ENCODE measurements at regions of chr6 and their contacts with region 1.

Region 1: GRCh38 chr6:130843575-130844320 is 16.5 kb downstream of the SMLR1 start:
- DNase-seq: no peak
- H3K4me3 Mint-ChIP-seq: no peak overlapping the region
- H3K27ac Mint-ChIP-seq: no peak overlapping the region
- H3K4me1 Mint-ChIP-seq: peaks cover 5% of the 10 kb centered on the region
- H3K27me3 Mint-ChIP-seq: no peaks in the 10 kb centered on the region

Region 2: GRCh38 chr6:130322673-130323268 is 521.0 kb before region 1 on chr6:
- CTCF ChIA-PET with region 1: interaction called, 13 read pairs
- POLR2A ChIA-PET with region 1: no interaction called
- DNase-seq: peak; percentile 60
- H3K4me3 Mint-ChIP-seq: no peak overlapping the region
- H3K27ac Mint-ChIP-seq: no peak overlapping the region
- H3K4me1 Mint-ChIP-seq: peaks cover 5% of the 10 kb centered on the region
- H3K27me3 Mint-ChIP-seq: no peaks in the 10 kb centered on the region

Region 3: GRCh38 chr6:130946076-130946475 is 102.3 kb after region 1 on chr6:
- CTCF ChIA-PET with region 1: no interaction called
- POLR2A ChIA-PET with region 1: no interaction called
- DNase-seq: no peak
- H3K4me3 Mint-ChIP-seq: no peak overlapping the region
- H3K27ac Mint-ChIP-seq: no peak overlapping the region
- H3K4me1 Mint-ChIP-seq: no peaks in the 10 kb centered on the region
- H3K27me3 Mint-ChIP-seq: no peaks in the 10 kb centered on the region